HEK293T (cell line): ENCODE measurements at regions of chr19 and their contacts with region 1.

Region 1: GRCh38 chr19:19203012-19203856 is at the start of gene NR2C2AP:
- DNase-seq: peak; percentile 96

Region 2: DNA sequence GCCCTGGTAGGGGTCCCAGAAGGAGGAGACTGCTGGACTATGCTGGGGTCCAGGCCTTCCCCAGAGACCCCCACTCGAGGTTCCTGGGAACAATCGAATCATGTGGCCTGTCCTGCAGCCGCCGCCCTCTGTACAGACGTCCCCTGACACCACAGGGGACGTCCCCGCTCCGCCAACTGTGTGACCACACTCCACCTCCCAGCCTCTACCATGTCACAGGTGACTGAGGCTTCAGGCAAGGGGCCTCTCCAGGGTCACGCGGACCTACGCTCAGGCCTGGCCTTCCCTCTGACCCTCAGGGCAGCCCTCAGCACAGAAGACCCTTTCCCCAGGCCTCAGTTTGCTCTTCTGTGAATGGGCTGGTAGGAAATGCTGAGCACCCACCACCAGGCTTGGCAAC is 51.8 kb before region 1 on chr19:
- CTCF ChIA-PET with region 1: no interaction called
- POLR2A ChIA-PET with region 1: no interaction called
- DNase-seq: no peak

Region 3: GRCh38 chr19:19162495-19162894 is 40.7 kb before region 1 on chr19:
- CTCF ChIA-PET with region 1: no interaction called
- POLR2A ChIA-PET with region 1: no interaction called
- DNase-seq: no peak

Region 4: GRCh38 chr19:19192078-19192882 is 11.0 kb before region 1 on chr19 and contains the starts of genes BORCS8 and RFXANK:
- CTCF ChIA-PET with region 1: interaction called, 3 read pairs
- POLR2A ChIA-PET with region 1: interaction called, 46 read pairs
- DNase-seq: peak; percentile 95